ENCODE measurements at regions of chr5 and their contacts with region 1.

Region 1: DNA sequence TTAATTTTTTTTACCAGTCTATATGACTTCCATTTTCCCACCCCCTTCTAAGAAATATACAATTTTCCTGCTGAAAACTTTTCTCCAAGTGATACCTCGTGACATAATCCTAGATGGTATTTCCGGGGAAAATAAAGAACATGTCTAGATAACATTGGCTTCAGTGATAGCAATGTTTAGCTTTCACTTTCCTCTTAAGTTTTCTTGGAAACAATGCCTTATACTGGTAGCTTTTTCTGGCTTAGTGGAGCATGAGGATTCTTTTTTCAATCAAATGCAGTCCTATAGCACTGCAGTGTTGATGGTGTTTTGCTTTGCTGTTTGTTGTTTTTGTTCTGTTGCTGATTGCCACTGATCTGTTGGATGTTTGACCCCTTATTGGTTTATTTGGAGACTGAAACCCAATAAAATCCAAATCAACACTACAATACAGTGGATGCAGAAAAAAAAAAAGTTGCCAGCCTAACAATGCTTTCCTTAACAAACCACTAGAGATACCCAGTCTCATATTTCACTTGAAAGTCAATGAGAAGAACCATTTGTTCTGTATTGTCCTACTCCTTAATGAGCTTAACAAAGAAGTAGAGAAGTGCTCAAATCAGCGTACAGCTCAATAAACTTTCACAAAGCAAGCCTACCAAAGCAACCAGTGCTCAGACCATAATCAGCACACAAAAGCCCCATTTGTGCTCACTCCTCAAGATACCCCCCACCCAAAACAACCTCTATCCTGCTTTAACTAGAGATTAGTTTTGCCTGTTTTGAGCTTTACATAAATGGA is 74.2 kb upstream of the GRAMD2B start:
- DNase-seq: no peak
- H3K4me3 ChIP-seq: no peak overlapping the region
- H3K27ac ChIP-seq: no peak overlapping the region
- H3K4me1 ChIP-seq: peaks cover under 1 to 2% (median under 1%) of the 10 kb centered on the region in 3 donors
- H3K27me3 ChIP-seq: no peaks in the 10 kb centered on the region
- CTCF ChIP-seq: no peak
- POLR2A ChIP-seq: no peak

Region 2: DNA sequence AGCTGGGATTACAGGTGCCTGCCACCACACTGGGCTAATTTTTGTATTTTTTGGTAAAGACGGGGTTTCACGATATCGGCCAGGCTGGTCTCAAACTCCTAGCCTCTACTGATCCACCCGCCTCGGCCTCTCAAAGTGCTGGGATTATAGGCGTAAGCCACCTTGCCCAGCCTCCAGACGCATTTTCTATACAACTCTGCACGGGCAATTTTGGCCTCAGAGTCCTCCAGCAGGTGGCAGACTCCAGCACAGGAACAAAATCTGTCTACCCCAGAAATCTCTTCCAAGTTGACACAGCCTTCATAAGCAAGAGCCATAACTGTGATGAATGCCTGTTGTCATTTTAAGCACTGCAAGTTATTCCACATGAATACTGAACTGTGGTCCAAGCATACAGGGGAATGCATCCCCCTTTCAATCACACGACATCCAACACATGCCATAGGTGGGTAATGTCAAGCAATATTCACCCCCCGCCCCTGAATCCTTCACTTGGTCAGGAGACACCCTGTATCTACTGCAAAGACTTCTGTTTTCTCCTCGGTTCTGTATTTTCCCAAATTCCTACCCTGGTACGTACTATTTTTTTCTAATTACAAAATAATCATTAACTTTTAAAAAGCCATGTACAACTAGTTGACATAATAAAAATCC is 195.2 kb after region 1 on chr5:
- intact Hi-C with region 1: loop called (anchors 5 kb)
- DNase-seq: no peak
- H3K4me3 ChIP-seq: no peak overlapping the region
- H3K27ac ChIP-seq: no peak overlapping the region
- H3K4me1 ChIP-seq: peaks cover 0 to 2% (median 0%) of the 10 kb centered on the region in 3 donors
- H3K27me3 ChIP-seq: no peaks in the 10 kb centered on the region
- CTCF ChIP-seq: peak in 5 of 6 experiments; percentile 31 to 61 (median 45)
- POLR2A ChIP-seq: no peak

Region 3: DNA sequence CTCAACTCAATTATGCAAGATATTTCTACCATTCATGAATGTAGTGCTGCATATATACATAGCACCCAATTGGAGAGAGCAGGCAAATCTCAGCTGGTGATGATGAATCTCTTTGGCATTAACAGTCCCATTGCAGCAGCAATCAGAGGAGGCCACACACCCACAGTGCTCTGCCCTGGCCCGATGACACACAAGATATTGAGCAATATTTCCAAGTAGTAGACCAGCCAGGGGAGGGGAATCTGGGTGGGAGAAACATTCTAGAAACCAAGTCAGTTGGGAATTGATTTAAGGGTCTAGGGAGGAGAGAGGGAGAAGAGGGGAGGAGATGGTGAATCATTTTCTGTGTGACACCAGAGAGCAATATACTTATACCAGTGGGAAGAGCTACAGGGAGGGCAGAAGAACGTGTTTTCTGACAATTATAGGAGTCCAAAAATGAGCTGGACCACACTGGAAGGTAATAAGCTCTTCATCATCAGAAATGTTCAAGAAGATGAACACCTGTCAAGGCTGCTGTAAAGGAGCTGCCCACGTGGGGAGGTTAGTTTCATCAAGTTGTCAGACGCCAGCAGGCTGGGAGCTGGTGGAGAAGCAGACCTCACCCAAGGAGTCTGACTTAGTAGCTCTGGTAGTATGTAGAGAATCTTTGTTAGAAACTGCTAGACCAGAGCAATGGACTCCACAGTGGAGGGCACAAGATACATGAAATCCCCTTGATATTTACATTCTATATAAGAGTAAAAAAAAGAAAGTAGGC is 739.4 kb after region 1 on chr5:
- intact Hi-C with region 1: no loop called
- DNase-seq: no peak
- H3K4me3 ChIP-seq: no peak overlapping the region
- H3K27ac ChIP-seq: no peak overlapping the region
- H3K4me1 ChIP-seq: peaks cover 0 to 38% (median 0%) of the 10 kb centered on the region in 3 donors
- H3K27me3 ChIP-seq: no peaks in the 10 kb centered on the region
- CTCF ChIP-seq: no peak
- POLR2A ChIP-seq: no peak

Measured in esophagus squamous epithelium (tissue), 5 donors.